ENCODE measurements at regions of chr14 and their contacts with region 1.

Region 1: GRCh38 chr14:103546652-103547454 is 15.6 kb downstream of the BAG5 start:
- DNase-seq: no peak
- H3K4me3 ChIP-seq: no peak overlapping the region
- H3K27ac ChIP-seq: no peak overlapping the region
- H3K4me1 ChIP-seq: peaks cover 46 to 65% of the 10 kb centered on the region in 2 donors
- H3K27me3 ChIP-seq: no peaks in the 10 kb centered on the region
- CTCF ChIP-seq: peak; percentile 84 to 93 (median 86)

Region 2: GRCh38 chr14:103500148-103500990 is 46.5 kb before region 1 on chr14:
- intact Hi-C with region 1: loop called (anchors 1 kb)
- DNase-seq: peak in 1 of 2 donors; percentile 95
- H3K4me3 ChIP-seq: no peak overlapping the region
- H3K27ac ChIP-seq: peak overlapping the region; percentile 55
- H3K4me1 ChIP-seq: peaks cover 3 to 5% of the 10 kb centered on the region in 2 donors
- H3K27me3 ChIP-seq: no peaks in the 10 kb centered on the region
- CTCF ChIP-seq: peak; percentile 79 to 93 (median 90)

Region 3: GRCh38 chr14:103576371-103577024 is 29.6 kb after region 1 on chr14:
- intact Hi-C with region 1: no loop called
- DNase-seq: peak; percentile 65 to 94
- H3K4me3 ChIP-seq: no peak overlapping the region
- H3K27ac ChIP-seq: peak overlapping the region; percentile 69 to 73
- H3K4me1 ChIP-seq: peaks cover 0 to 14% of the 10 kb centered on the region in 2 donors
- H3K27me3 ChIP-seq: no peaks in the 10 kb centered on the region
- CTCF ChIP-seq: no peak

Region 4: DNA sequence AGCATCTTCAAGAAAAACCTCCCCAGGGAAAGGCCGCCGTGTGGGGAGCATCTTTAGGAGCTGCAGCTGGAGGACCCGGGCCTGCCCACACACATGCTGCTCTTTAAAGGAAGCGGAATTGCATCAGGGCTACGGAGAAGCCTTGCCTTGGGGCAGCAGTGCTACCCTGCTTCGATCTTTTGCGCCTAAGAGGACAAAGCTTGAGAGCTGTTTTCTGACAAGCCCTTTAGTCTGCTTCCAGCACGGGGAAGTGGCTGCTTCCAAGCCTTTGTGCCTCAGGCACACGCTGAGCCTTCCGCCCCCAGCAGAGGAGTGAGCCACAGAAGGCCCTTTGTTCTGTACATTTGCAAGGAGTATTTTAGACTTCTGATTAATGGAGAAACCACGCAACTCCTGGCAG is 47.4 kb after region 1 on chr14:
- intact Hi-C with region 1: no loop called
- DNase-seq: no peak
- H3K4me3 ChIP-seq: no peak overlapping the region
- H3K27ac ChIP-seq: no peak overlapping the region
- H3K4me1 ChIP-seq: no peaks in the 10 kb centered on the region
- H3K27me3 ChIP-seq: no peaks in the 10 kb centered on the region
- CTCF ChIP-seq: no peak

Region 5: GRCh38 chr14:103775506-103775905 is 228.7 kb after region 1 on chr14:
- intact Hi-C with region 1: no loop called
- DNase-seq: no peak
- H3K4me3 ChIP-seq: no peak overlapping the region
- H3K27ac ChIP-seq: no peak overlapping the region
- H3K4me1 ChIP-seq: no peaks in the 10 kb centered on the region
- H3K27me3 ChIP-seq: no peaks in the 10 kb centered on the region
- CTCF ChIP-seq: no peak

Measured in ascending aorta (tissue), 2 donors.